Activated CD4-positive, alpha-beta T cell treated with anti-CD3 and anti-CD28 coated beads, Interleukin-2, amount 10 ng/mL, durations not matched to agents 7 days and 5 days (primary cell): ENCODE measurements at regions of chr18 and their contacts with region 1.

Region 1: GRCh38 chr18:62522504-62523254 is at the start of gene ZCCHC2:
- DNase-seq: peak; percentile 97
- H3K4me3 Mint-ChIP-seq: peak within 1 kb of the TSS; percentile 98
- H3K27ac Mint-ChIP-seq: peak within 1 kb of the TSS; percentile 98
- H3K4me1 Mint-ChIP-seq: peaks cover 35% of the 10 kb centered on the region
- H3K27me3 Mint-ChIP-seq: no peaks in the 10 kb centered on the region
- total RNA-seq, gene ZCCHC2: 55.1 to 62.5 TPM

Region 2: GRCh38 chr18:62460851-62461300 is 61.8 kb before region 1 on chr18:
- CTCF ChIA-PET with region 1: no interaction called
- POLR2A ChIA-PET with region 1: no interaction called
- DNase-seq: no peak
- H3K4me3 Mint-ChIP-seq: no peak overlapping the region
- H3K27ac Mint-ChIP-seq: no peak overlapping the region
- H3K4me1 Mint-ChIP-seq: no peaks in the 10 kb centered on the region
- H3K27me3 Mint-ChIP-seq: peaks cover 4% of the 10 kb centered on the region

Region 3: DNA sequence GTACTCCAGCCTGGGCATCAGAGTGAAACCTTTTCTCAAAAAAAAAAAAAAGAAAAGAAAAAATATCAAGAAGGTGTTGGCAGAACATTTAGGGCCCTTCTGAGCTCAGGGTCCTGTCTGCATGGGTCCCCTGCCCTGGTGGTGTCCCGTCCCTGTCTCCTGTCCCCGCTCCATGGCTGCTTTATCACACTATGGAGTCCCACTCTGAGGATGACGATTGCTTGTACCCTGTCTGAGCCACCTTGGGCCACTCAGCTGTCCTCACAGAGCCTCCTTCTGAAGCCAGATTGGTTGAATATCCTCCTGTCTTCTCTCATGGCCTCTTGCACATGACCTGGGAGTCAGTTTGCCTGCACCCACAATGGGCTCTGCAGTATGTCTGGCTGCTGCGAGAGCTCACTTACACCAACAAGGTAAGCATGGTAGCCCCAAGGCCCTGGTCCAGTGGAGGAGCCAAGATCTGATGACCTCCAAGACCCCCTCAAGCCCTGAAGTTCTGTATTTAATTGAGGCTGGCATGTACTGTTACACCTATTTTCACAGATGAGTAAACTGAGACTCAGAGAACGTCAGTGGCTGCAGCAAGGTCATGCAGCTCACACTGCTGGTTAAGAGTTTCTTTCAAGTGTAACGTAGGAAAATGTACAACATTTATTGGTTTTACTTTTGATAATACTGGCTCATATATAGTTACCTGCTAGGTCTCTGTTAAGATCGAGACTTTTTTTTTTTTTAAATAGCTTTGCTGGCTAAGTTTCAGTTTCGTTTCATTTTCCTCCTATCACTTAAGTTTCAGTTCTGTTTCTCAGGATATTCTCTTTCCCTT is 16.8 kb before region 1 on chr18:
- CTCF ChIA-PET with region 1: interaction called, 33 read pairs
- POLR2A ChIA-PET with region 1: interaction called, 7 read pairs
- DNase-seq: peak; percentile 43
- H3K4me3 Mint-ChIP-seq: peak overlapping the region; percentile 72
- H3K27ac Mint-ChIP-seq: peak overlapping the region; percentile 100
- H3K4me1 Mint-ChIP-seq: peaks cover 49% of the 10 kb centered on the region
- H3K27me3 Mint-ChIP-seq: no peaks in the 10 kb centered on the region

Region 4: DNA sequence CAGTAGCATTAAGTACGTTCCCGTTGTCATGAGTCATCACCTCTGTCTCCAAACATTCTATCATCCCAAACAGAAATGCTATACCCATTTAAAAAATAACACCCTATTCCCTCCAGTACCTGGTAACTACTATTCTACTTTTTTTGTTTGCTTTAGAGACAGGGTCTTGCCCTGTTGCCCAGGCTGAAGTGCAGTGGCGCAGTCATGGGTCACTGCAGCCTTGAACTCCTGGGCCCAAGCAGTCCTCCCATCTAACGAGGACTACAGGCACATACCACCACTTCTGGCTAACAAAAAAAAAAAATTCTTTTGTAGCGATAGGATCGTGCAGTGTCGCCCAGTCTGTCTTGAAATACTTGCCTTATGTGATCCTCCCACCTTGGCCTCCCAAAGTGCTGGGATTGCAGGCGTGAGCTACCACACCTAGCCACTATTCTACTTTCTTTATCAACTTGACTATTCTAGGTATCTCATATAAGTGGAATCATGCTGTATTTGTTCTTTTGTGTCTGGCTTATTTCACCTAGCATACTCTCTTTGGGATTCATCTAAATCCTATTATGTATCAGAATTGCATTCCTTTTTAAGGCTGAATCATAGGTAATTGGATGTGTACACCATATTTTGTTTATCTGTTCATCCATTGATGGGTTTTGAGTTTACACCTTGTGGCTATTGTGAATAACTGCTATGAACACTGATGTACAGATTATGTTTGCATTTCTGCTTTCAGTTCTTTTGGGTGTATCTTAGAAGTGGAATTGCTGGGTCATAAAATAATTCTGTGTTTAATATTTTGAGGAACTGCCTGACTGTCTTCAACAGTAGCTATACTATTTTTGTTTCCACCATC is 14.6 kb after region 1 on chr18:
- CTCF ChIA-PET with region 1: no interaction called
- POLR2A ChIA-PET with region 1: no interaction called
- DNase-seq: no peak
- H3K4me3 Mint-ChIP-seq: no peak overlapping the region
- H3K27ac Mint-ChIP-seq: peak overlapping the region; percentile 11
- H3K4me1 Mint-ChIP-seq: peaks cover 48% of the 10 kb centered on the region
- H3K27me3 Mint-ChIP-seq: no peaks in the 10 kb centered on the region